ENCODE measurements at regions of chr4 and their contacts with region 1.

Region 1: DNA sequence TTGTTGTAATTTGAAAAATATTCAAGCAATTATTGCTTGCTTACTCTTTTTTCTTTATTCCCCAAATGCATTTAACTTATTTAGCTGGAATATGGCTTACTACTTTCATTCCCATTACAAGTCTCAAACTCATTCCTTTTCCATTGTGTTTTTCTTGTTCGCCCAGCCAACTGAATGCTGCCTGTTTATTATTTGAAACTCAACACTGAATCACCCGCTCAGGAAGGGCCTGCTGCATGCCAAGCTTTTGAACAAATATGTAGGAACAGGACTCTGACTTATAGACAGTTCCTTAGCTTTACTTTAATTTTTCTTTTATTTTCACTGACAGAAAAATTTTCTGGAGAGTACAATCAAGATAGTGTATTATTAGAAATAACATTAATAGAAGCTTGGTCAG is 12.9 kb downstream of the PCDH18 start:
- DNase-seq: peak; percentile 83
- ATAC-seq: peak; percentile 73
- H3K4me3 ChIP-seq: no peak overlapping the region
- H3K27ac ChIP-seq: no peak overlapping the region; the same call in 1 of the 2 replicates
- H3K4me1 ChIP-seq: no peaks in the 10 kb centered on the region
- H3K27me3 ChIP-seq: no peaks in the 10 kb centered on the region
- CTCF ChIP-seq: no peak
- POLR2A ChIP-seq: no peak
- RAD21 ChIP-seq: 0 out of 2 replicates have a peak, but pooled peaks have one; percentile 6

Region 2: DNA sequence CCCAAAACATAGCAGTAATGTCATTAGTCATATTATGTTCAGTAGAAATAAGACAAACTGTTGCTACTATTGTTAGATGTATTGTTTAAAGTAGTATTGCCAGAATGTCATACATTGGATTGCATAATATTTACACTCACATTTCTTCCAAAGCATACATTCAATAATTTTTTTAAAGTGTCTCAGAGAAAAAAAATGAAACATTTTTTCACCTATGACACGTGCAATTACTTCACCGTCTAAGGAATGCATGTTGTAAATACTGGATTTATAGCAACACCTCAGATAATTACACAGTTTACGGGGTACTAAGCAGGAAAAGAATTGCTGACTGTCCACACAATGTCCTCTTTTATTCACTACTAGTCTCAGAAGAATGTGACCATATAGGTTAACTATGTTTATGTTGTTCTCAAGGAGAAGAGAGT is 149.2 kb before region 1 on chr4:
- CTCF ChIA-PET with region 1: no interaction called
- POLR2A ChIA-PET with region 1: no interaction called
- dilution Hi-C with region 1: no loop called
- in situ Hi-C with region 1: no loop called
- intact Hi-C with region 1: loop called (anchors 5 kb)
- DNase-seq: peak; percentile 85
- ATAC-seq: peak; percentile 68
- H3K4me3 ChIP-seq: no peak overlapping the region
- H3K27ac ChIP-seq: no peak overlapping the region
- H3K4me1 ChIP-seq: peaks cover 12% of the 10 kb centered on the region
- H3K27me3 ChIP-seq: no peaks in the 10 kb centered on the region
- CTCF ChIP-seq: no peak
- POLR2A ChIP-seq: no peak
- RAD21 ChIP-seq: no peak